AG04449 (cell line): ENCODE measurements at regions of chr2 and their contacts with region 1.

Region 1: DNA sequence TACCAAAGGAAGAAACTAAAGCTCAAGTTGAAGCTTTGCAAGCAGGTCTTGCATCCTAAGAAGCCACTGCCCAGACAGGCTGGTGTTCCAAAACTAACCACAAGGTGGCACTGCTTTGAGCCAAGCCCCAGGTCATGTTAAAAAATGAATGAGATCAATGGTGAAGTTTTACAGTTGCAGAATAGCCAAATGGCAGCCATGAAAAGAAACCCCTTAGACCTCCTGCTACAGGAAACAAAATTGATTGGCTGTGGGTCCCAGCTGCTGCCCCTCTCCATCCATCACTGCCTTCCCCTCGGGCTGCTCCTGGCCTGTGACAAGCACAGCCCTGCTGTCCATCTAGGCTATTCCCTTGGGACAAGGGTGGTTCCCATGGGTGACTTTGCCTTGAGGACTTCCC is 20.7 kb upstream of the MREG start:
- DNase-seq: no peak
- H3K4me3 ChIP-seq: no peak overlapping the region
- CTCF ChIP-seq: peak; percentile 75

Region 2: GRCh38 chr2:215949991-215950404 is 84.1 kb before region 1 on chr2:
- CTCF ChIA-PET with region 1: interaction called, 10 read pairs
- POLR2A ChIA-PET with region 1: no interaction called
- DNase-seq: no peak
- H3K4me3 ChIP-seq: no peak overlapping the region
- CTCF ChIP-seq: peak; percentile 39

Region 3: DNA sequence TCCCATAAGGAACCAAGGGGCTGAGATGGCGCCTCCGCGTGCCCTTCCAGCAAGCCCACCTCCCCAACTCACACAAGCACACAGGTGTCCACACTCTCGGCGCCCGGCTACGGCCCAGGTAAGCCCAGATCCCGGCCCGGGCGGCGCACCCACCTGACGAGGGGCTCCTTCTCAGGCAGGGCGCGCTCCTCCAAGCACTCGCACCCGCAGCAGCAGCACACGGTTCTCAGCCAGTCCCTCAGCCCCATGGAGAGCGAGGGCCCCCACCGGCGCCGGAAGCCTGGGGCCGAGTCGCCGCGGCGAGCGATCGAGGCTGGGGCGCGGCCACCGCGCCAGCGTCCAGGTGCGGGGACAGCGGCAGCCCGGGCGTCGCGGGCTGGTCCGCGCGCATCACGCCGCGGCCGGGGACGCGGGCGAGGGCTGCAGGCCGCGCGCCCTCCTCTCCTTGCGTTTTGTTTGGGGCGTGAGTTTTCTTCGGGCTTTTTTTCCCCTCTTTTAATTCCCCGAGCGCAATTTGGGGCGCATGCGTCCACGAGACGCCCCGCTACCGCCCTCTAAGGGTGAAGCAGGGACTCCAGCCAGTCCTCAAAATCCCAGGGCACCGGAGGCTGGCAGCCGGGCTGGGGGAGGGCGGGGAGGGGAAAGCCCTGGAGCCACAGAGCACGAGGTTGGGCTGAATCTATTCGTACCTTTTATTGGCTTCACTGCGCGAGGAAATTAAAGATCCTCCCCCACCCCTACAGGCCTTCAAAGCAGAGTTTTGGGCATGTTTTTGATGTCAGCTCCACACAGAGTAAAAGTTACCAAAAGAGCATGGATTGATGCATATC is 20.8 kb before region 1 on chr2 and contains the start of gene MREG:
- CTCF ChIA-PET with region 1: interaction called, 21 read pairs
- POLR2A ChIA-PET with region 1: no interaction called
- DNase-seq: no peak
- H3K4me3 ChIP-seq: peak within 1 kb of the TSS; percentile 70
- CTCF ChIP-seq: peak; percentile 86

Region 4: GRCh38 chr2:216023055-216023648 is 10.9 kb before region 1 on chr2:
- CTCF ChIA-PET with region 1: interaction called, 107 read pairs
- POLR2A ChIA-PET with region 1: no interaction called
- DNase-seq: no peak
- H3K4me3 ChIP-seq: no peak overlapping the region
- CTCF ChIP-seq: peak; percentile 63

Region 5: DNA sequence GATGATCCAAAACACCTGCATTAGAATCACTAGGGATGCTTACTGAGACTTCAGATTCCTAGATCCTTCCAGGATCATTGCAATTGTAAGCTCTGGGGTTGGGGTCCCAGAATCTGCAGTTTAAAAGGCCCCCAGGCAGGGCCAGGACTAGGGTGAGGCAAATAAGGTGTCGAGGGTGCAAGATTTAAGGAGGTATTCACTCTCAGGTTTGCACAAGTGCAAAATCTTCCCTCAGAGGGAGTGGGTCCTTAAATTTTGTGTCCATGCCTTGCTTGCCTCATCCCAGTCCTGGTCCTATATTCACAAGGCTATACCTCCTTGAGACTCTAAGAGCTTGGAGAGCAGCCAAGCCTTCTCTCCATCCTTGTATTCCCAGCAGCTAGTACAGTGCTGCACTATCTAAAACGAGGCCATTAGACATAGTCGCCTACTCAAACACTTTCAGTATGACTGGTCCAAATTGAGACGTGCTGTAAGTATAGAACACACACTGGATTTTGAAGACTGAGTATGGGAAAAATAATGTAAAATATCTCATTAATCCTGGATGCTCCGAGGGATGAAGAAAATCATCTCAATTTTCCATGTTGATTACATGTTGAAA is 10.9 kb after region 1 on chr2:
- CTCF ChIA-PET with region 1: interaction called, 104 read pairs
- POLR2A ChIA-PET with region 1: no interaction called
- DNase-seq: no peak
- H3K4me3 ChIP-seq: no peak overlapping the region
- CTCF ChIP-seq: no peak

Region 6: DNA sequence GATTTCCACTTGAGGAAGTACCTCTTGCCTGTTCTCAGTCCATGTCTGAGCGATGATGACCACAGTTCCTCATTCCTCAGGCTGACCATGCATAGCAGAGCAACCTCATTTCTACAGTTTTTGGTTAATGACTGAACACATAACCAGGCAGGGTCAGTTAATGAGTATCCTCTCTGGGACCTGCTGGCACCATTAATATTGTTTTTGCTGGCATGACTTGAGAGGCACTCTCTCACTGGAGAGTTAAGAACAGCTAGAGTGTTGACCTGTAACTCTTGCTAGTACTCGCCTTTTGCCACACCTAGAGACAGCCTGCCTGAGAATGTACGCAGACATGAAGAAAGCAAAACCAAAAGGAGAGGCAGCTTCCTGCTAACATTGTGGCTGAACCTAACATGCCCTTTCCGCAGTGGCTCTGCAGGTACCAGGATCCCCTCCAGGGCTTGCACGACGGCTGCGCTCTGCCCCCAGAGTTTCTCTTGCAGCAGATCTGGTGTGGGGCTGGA is 23.7 kb after region 1 on chr2:
- CTCF ChIA-PET with region 1: interaction called, 104 read pairs
- POLR2A ChIA-PET with region 1: no interaction called
- DNase-seq: peak; percentile 60
- H3K4me3 ChIP-seq: no peak overlapping the region
- CTCF ChIP-seq: no peak

Region 7: GRCh38 chr2:216108967-216109921 is 75.2 kb after region 1 on chr2 and contains the start of gene XRCC5:
- CTCF ChIA-PET with region 1: interaction called, 28 read pairs
- POLR2A ChIA-PET with region 1: no interaction called
- DNase-seq: peak; percentile 76
- H3K4me3 ChIP-seq: peak within 1 kb of the TSS; percentile 94
- CTCF ChIP-seq: no peak